Heart left ventricle (tissue), 16 donors: ENCODE measurements at regions of chr18 and their contacts with region 1.

Region 1: DNA sequence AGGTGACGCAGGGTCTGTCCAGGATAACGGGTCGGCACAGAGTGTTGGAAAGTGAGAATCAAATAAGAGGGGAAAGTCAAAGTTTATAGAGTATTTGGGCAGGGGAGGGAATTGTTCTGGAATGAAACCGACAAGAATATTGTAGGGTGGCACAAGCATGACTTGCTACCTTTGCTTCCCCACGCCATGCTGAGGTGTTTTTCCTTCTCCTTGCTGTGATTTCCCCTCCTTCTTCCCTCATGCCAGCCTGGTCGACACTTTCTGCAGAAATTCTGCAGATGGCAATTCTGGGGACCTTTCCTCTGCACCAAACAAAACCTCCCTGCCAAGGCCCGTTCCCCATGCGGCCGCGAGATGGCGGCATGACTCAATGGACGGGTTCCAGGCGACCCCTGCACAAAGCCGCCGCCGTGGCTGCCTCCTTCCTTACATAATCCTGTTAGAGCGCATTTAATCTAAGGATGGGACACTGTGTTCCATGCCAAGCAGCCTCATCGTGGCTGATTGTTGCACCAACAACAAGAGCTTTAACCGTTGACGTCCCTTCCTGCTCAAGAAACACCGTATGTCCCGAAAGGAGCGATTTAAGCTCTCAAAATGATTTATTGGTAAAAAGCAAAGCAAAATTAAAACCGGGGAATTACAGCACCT is at the start of gene MRO:
- DNase-seq: peak; percentile 82 to 93 (median 89)
- ATAC-seq: peak; percentile 96 to 97 (median 96)
- H3K4me3 ChIP-seq: peak within 1 kb of the TSS in 11 of 12 donors; percentile 21 to 60 (median 43)
- H3K27ac ChIP-seq: peak within 1 kb of the TSS in 11 of 12 donors; percentile 2 to 72 (median 50)
- H3K4me1 ChIP-seq: peaks cover 0 to 28% (median 12%) of the 10 kb centered on the region in 12 donors
- H3K27me3 ChIP-seq: no peaks in the 10 kb centered on the region
- CTCF ChIP-seq: peak; percentile 84 to 96 (median 92)
- POLR2A ChIP-seq: no peak
- total RNA-seq, gene MRO: 0.42 to 6.9 (median 3.7) TPM

Region 2: DNA sequence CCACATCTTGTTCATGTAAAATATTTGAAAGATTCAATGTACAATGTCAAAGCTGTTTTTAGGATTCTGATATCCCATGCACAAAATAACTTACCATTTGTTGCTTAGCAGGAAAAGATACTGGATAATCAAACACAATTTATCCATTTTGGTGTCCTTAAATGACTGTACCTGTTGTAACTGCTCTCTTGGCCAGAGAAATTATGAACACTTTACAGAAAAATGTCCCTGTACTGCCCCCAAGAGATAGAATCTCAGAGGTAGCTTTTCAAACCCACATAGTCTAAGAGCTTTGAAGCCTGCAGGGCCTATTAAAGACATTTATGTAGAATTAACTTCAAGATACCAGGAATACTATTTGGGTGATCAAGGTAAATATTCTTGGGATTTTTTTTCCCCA is 46.9 kb after region 1 on chr18:
- intact Hi-C with region 1: loop called in 7 of 10 experiments (anchors 1 to 5 kb)
- DNase-seq: no peak
- ATAC-seq: peak; percentile 51 to 78 (median 69)
- H3K4me3 ChIP-seq: no peak overlapping the region
- H3K27ac ChIP-seq: no peak overlapping the region
- H3K4me1 ChIP-seq: peaks cover 0 to 16% (median 0%) of the 10 kb centered on the region in 12 donors
- H3K27me3 ChIP-seq: no peaks in the 10 kb centered on the region
- CTCF ChIP-seq: peak in 6 of 12 donors; percentile 7 to 38 (median 24)
- POLR2A ChIP-seq: no peak

Region 3: DNA sequence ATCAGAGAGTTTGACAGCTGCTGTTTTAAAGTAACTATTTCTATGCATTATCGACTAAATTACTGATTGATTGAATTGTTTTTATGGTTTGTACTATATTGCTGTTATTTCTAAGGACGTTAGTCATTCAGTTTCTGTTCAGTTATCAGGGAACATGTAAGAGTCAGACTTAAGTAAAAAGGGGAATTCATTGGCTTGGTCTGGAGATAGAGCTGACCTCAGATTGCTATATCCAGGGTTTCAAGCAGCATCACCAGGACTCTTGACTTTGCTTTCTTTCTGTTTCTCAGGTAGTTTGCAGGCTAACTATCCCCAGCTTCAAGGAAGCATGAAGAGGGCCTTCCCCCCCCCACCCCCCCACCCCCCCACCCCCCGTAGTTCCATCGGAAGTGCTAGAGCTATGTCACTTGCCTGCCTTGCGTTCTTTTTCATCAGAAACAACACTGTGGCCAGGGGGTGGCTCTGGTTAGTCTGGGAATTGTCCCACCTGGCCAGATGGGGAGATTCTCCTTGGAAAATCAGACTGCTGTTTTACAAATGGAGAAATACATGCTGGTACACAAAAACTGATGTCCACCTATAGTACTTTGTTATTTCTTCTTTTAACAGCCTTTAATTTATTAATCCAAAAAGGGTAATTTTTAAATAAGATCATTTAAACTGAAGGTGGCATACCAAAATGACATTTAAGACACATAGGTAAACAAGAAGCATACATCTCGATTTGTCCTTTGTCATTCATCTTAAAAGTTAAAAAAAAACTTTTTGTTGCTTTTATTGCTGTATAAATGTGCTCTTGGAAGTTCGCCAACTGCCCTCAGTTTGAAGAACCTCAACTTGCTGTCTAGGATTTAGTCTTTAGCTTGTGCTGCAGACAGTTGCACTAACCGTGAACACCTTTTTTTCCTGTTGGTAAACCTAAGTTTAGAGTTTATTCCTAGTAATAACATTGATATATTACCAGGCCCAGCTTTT is 219.6 kb after region 1 on chr18:
- intact Hi-C with region 1: loop called in 1 of 10 experiments (anchors 10 kb)
- DNase-seq: no peak
- ATAC-seq: no peak
- H3K4me3 ChIP-seq: no peak overlapping the region
- H3K27ac ChIP-seq: no peak overlapping the region
- H3K4me1 ChIP-seq: peaks cover 17 to 99% (median 85%) of the 10 kb centered on the region in 12 donors
- H3K27me3 ChIP-seq: no peaks in the 10 kb centered on the region
- CTCF ChIP-seq: no peak
- POLR2A ChIP-seq: no peak

Region 4: DNA sequence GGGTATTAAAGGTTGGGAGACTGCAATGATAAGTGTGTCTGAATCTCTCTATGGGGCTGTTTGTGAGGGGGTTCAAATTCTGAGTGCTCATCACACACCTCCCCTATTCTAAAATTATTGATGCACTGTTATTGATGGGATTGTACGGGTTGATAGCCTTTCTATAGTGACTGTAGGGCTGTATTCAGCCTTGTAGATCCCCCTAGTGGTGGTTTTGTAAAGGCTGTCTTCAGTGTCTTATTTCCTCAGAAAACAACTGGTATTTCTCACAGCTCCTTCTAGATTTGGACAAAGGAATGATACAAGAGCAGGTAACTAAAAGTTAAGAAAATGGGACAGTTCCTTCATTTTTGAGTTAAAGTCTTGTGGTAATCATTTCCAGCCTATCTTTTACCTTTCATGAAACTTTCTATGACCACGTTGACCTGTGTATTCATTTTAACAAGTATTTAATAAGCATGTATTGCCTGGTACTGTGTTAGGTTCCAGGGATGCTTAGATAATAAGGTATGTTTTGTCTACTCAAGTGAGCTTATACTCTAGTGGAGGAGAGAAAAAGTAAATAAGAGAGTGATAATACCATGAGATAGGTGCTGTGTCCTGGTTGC is 231.4 kb after region 1 on chr18:
- intact Hi-C with region 1: loop called (anchors 1 to 10 kb)
- DNase-seq: no peak
- ATAC-seq: peak; percentile 68 to 84 (median 76)
- H3K4me3 ChIP-seq: no peak overlapping the region
- H3K27ac ChIP-seq: no peak overlapping the region
- H3K4me1 ChIP-seq: peaks cover 0 to 22% (median 7%) of the 10 kb centered on the region in 12 donors
- H3K27me3 ChIP-seq: no peaks in the 10 kb centered on the region
- CTCF ChIP-seq: peak; percentile 67 to 85 (median 76)
- POLR2A ChIP-seq: no peak